Activated B cell treated with CpG ODN at 0.5 μM for 24 hours (primary cell): ENCODE measurements at regions of chr11 and their contacts with region 1.

Region 1: GRCh38 chr11:126716456-126717083 is 284.0 kb downstream of the KIRREL3 start:
- DNase-seq: no peak
- ATAC-seq: no peak
- H3K4me3 Mint-ChIP-seq: no peak overlapping the region
- H3K27ac Mint-ChIP-seq: no peak overlapping the region
- H3K4me1 Mint-ChIP-seq: no peaks in the 10 kb centered on the region
- H3K27me3 Mint-ChIP-seq: peaks cover 22% of the 10 kb centered on the region
- CTCF ChIP-seq: no peak

Region 2: DNA sequence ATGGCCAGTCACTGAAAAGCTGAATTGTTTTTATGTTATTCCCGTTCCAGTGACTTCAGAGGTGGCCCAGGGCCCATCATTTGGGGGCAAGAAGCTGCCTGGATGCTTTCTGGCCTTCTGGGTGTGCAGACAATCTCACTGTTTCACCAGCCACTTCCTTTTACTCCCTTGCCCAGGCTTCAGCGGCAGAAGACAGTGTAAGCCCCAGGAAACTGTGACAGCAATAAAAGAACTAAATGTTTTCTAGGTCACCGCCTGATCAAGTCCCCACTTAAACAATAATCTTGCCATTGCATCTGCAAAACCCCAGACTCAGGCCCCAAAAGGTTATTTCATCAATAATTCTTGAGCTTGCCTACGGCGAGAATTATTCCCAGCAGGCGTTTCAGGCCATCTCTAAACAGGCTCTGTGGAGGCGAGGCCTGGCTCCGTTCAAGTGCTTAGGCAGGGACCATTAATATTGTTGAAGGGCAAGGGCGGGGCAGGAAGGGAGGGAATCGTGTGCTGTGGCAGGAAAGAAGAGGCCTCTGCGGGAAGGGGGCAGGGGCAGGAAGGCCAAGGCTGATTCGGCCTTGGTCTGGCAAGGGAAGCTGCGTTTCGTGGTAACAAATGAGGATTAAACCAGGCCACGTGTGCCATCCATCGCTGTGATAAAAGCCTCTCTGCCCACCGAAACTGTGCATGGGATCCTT is 31.7 kb after region 1 on chr11:
- CTCF ChIA-PET with region 1: no interaction called
- POLR2A ChIA-PET with region 1: no interaction called
- intact Hi-C with region 1: no loop called
- DNase-seq: no peak
- ATAC-seq: no peak
- H3K4me3 Mint-ChIP-seq: no peak overlapping the region
- H3K27ac Mint-ChIP-seq: no peak overlapping the region
- H3K4me1 Mint-ChIP-seq: no peaks in the 10 kb centered on the region
- H3K27me3 Mint-ChIP-seq: no peaks in the 10 kb centered on the region
- CTCF ChIP-seq: no peak

Region 3: DNA sequence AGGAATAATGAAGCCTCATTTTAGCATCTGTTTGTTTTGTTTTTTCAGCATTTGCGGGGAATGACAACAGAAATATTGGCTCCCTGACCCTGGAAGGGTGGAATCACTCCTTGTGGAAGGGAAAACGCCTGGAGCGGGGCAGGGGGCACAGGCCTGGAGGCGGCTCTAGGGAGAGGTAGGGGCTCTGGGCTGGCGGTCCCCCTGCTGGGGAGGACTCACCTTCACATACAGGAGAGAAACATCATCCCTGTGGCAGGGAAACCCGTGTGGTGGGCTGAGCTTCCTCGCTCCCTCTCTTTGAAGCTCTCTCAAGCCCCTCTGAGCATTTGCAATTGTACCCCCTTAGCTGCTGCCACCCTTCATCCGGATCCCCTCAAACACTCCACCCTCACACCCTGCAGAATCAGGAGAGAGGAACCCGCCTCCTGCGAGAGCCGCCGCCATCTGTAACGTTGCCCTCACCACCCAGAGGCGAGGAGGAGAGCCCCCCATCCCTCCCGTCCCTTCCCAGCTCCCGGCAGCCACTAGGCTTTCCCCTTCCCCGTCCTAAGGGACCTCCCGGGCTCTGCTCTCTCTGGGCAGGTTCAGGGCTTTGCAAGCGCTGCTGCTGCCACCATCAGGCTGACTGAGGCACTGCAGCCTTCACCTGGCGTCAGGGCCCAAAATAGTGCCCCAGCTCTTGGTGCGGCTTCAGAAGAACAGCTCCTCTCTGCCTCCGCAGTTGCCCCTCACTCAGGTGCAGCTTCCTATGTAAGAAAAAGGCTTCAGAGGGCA is 273.6 kb after region 1 on chr11:
- CTCF ChIA-PET with region 1: no interaction called
- POLR2A ChIA-PET with region 1: no interaction called
- intact Hi-C with region 1: loop called (anchors 5 kb)
- DNase-seq: peak; percentile 32
- ATAC-seq: peak; percentile 52
- H3K4me3 Mint-ChIP-seq: no peak overlapping the region
- H3K27ac Mint-ChIP-seq: no peak overlapping the region
- H3K4me1 Mint-ChIP-seq: no peaks in the 10 kb centered on the region
- H3K27me3 Mint-ChIP-seq: peaks cover 14% of the 10 kb centered on the region
- CTCF ChIP-seq: peak; percentile 18